A673 (cell line): ENCODE measurements at regions of chr5 and their contacts with region 1.

Region 1: GRCh38 chr5:63401436-63402046 is 560.7 kb downstream of the HTR1A start:
- DNase-seq: peak; percentile 68
- H3K4me3 ChIP-seq: no peak overlapping the region
- H3K27ac ChIP-seq: no peak overlapping the region
- H3K4me1 ChIP-seq: no peaks in the 10 kb centered on the region
- H3K27me3 ChIP-seq: peaks cover 19% of the 10 kb centered on the region
- CTCF ChIP-seq: peak; percentile 90

Region 2: GRCh38 chr5:63101870-63102269 is 299.7 kb before region 1 on chr5:
- CTCF ChIA-PET with region 1: no interaction called
- POLR2A ChIA-PET with region 1: no interaction called
- intact Hi-C with region 1: no loop called
- DNase-seq: no peak
- H3K4me3 ChIP-seq: no peak overlapping the region
- H3K27ac ChIP-seq: no peak overlapping the region
- H3K4me1 ChIP-seq: no peaks in the 10 kb centered on the region
- H3K27me3 ChIP-seq: peaks cover 22% of the 10 kb centered on the region
- CTCF ChIP-seq: no peak

Region 3: DNA sequence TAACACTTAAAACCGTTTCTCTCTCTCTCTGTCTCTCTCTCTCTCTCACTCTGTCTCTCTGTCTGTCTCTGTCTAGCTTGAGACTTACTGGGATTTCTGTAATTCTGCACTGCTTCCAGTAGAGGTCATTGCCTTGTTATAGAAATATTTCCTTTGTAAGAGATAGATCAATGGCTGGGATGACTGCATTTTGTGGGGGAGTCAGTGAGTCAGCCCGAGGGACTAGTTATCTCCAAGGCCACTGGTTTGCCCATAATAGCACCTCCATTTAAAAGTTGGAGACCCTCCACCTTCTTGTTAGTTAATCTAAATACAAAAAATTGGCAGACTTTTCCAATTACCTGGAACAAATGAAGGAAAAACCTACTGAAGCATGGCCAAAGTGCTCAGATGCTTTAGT is 275.7 kb before region 1 on chr5:
- CTCF ChIA-PET with region 1: no interaction called
- POLR2A ChIA-PET with region 1: no interaction called
- intact Hi-C with region 1: loop called (anchors 5 kb)
- DNase-seq: peak; percentile 66
- H3K4me3 ChIP-seq: no peak overlapping the region
- H3K27ac ChIP-seq: no peak overlapping the region
- H3K4me1 ChIP-seq: peaks cover 7% of the 10 kb centered on the region
- H3K27me3 ChIP-seq: no peaks in the 10 kb centered on the region
- CTCF ChIP-seq: peak; percentile 62

Region 4: DNA sequence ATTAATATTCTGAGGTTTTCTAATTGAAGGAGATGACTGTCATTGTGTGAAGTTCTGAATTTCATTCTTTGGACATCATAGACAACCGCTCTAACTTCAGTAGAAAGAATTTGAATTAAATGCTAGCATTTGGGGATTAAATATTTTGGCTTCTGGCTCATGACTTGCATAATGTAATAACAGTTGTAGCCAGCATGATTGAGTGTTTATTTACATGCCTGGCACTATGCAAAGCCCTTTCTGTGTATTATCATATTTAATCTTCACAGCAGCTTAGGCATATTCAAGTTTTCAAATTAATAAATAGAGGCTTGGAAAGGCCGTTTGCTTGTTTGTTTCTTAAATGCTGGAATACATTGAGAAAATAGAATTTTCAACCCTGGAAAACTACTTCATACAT is 580.3 kb after region 1 on chr5:
- CTCF ChIA-PET with region 1: no interaction called
- POLR2A ChIA-PET with region 1: no interaction called
- intact Hi-C with region 1: no loop called
- DNase-seq: no peak
- H3K4me3 ChIP-seq: no peak overlapping the region
- H3K27ac ChIP-seq: no peak overlapping the region
- H3K4me1 ChIP-seq: no peaks in the 10 kb centered on the region
- H3K27me3 ChIP-seq: no peaks in the 10 kb centered on the region
- CTCF ChIP-seq: no peak

Region 5: GRCh38 chr5:64437496-64437895 is 1036.0 kb after region 1 on chr5:
- CTCF ChIA-PET with region 1: no interaction called
- POLR2A ChIA-PET with region 1: no interaction called
- intact Hi-C with region 1: no loop called
- DNase-seq: no peak
- H3K4me3 ChIP-seq: no peak overlapping the region
- H3K27ac ChIP-seq: no peak overlapping the region
- H3K4me1 ChIP-seq: no peaks in the 10 kb centered on the region
- H3K27me3 ChIP-seq: no peaks in the 10 kb centered on the region
- CTCF ChIP-seq: no peak